Mammary epithelial cell (primary cell): ENCODE measurements at regions of chr16 and their contacts with region 1.

Region 1: GRCh38 chr16:13453938-13454553 is 465.9 kb upstream of the ERCC4 start:
- DNase-seq: peak; percentile 48
- H3K4me3 ChIP-seq: no peak overlapping the region
- H3K27ac ChIP-seq: peak overlapping the region; percentile 50
- H3K4me1 ChIP-seq: peaks cover 15% of the 10 kb centered on the region
- H3K27me3 ChIP-seq: no peaks in the 10 kb centered on the region
- CTCF ChIP-seq: peak; percentile 67 to 69

Region 2: GRCh38 chr16:12095275-12096156 is 1358.5 kb before region 1 on chr16:
- CTCF ChIA-PET with region 1: no interaction called
- dilution Hi-C with region 1: no loop called
- in situ Hi-C with region 1: no loop called
- intact Hi-C with region 1: loop called (anchors 5 kb)
- DNase-seq: peak; percentile 10
- H3K4me3 ChIP-seq: no peak overlapping the region
- H3K27ac ChIP-seq: no peak overlapping the region
- H3K4me1 ChIP-seq: no peaks in the 10 kb centered on the region
- H3K27me3 ChIP-seq: no peaks in the 10 kb centered on the region
- CTCF ChIP-seq: peak; percentile 87

Region 3: GRCh38 chr16:12455287-12455798 is 998.7 kb before region 1 on chr16:
- CTCF ChIA-PET with region 1: no interaction called
- dilution Hi-C with region 1: no loop called
- in situ Hi-C with region 1: no loop called
- intact Hi-C with region 1: loop called (anchors 1 kb)
- DNase-seq: peak; percentile 35
- H3K4me3 ChIP-seq: no peak overlapping the region
- H3K27ac ChIP-seq: no peak overlapping the region
- H3K4me1 ChIP-seq: no peaks in the 10 kb centered on the region
- H3K27me3 ChIP-seq: no peaks in the 10 kb centered on the region
- CTCF ChIP-seq: peak; percentile 73 to 85

Region 4: DNA sequence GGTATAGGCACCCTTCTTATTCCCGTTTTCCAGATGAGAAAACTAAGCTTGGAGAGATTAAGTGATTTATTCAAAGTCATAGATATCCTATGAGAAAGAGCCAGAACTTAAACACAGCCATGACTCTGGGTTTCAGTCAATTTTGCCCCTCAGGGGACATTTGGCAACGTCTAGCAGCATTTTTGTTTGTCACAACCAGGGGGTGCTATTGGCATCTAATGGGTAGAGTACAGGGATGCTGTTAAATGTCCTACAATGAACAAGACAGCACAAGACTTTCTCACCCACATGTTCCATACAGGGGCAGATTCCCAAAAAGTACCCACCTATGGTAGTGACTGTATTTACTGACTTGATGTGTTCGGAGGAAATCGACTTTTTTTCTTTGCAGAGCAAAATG is 557.5 kb before region 1 on chr16:
- CTCF ChIA-PET with region 1: interaction called, 6 read pairs
- dilution Hi-C with region 1: no loop called
- in situ Hi-C with region 1: loop called (anchors 5 to 10 kb)
- intact Hi-C with region 1: loop called (anchors 1 kb)
- DNase-seq: peak; percentile 61
- H3K4me3 ChIP-seq: no peak overlapping the region
- H3K27ac ChIP-seq: no peak overlapping the region
- H3K4me1 ChIP-seq: peaks cover 19% of the 10 kb centered on the region
- H3K27me3 ChIP-seq: no peaks in the 10 kb centered on the region
- CTCF ChIP-seq: peak; percentile 64 to 84

Region 5: DNA sequence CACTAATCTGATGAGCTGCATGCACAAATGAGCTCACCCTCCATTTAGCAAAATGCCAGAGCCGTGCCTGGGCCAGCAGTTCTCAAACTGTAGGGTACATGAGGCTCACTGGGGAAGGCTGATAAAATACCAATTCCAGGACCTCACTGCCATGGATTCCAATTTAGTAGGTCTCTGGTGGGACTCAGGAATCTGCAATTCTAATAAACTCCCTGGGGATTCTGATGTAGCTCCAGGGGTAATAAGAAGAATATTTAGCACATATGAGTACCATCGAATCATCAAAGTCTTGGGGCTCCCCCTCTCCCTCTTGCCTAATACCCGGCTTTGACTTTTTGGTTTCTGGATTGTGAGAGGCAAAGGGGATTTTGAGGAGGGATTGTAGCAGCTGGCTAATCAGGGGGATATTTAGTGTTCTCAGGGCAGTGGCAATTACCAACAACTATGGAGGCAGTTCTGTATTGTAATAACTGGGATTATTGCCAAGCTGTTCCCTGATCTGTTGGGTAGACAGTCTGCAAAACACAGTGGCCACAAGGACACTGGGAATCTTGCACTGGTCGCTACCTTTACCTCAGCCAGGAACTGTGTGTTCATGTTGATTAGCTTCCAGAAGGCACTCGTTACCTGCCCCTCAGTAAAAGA is 412.3 kb before region 1 on chr16:
- CTCF ChIA-PET with region 1: no interaction called
- dilution Hi-C with region 1: no loop called
- in situ Hi-C with region 1: no loop called
- intact Hi-C with region 1: loop called (anchors 10 kb)
- DNase-seq: no peak
- H3K4me3 ChIP-seq: no peak overlapping the region
- H3K27ac ChIP-seq: no peak overlapping the region
- H3K4me1 ChIP-seq: no peaks in the 10 kb centered on the region
- H3K27me3 ChIP-seq: no peaks in the 10 kb centered on the region
- CTCF ChIP-seq: no peak

Region 6: GRCh38 chr16:13206606-13207005 is 247.4 kb before region 1 on chr16:
- CTCF ChIA-PET with region 1: no interaction called
- dilution Hi-C with region 1: no loop called
- in situ Hi-C with region 1: no loop called
- intact Hi-C with region 1: no loop called
- DNase-seq: no peak
- H3K4me3 ChIP-seq: no peak overlapping the region
- H3K27ac ChIP-seq: no peak overlapping the region
- H3K4me1 ChIP-seq: no peaks in the 10 kb centered on the region
- H3K27me3 ChIP-seq: no peaks in the 10 kb centered on the region
- CTCF ChIP-seq: no peak

Region 7: DNA sequence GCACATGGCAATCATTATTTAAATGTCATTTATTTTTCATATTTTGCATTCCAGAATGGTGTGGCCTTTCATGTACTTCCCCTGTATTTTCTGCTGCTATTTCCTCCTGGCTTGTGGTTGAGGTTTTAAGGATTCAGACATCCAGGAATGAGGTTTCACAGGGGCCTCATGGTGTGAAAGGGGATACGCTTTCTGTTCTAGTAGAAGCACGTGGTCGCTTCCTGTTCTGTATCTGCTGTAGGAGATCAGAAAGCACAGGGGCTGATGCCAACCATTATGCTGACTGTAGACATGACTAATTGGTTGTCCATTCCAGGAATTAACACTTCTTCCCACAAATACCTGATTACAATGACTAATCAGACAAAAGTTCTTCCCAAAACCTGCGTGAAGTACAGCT is 146.8 kb before region 1 on chr16:
- CTCF ChIA-PET with region 1: no interaction called
- dilution Hi-C with region 1: no loop called
- in situ Hi-C with region 1: no loop called
- intact Hi-C with region 1: loop called (anchors 10 kb)
- DNase-seq: peak; percentile 96
- H3K4me3 ChIP-seq: no peak overlapping the region
- H3K27ac ChIP-seq: peak overlapping the region; percentile 57
- H3K4me1 ChIP-seq: peaks cover 37% of the 10 kb centered on the region
- H3K27me3 ChIP-seq: no peaks in the 10 kb centered on the region
- CTCF ChIP-seq: no peak

Region 8: GRCh38 chr16:13873835-13874438 is 419.9 kb after region 1 on chr16:
- CTCF ChIA-PET with region 1: no interaction called
- dilution Hi-C with region 1: no loop called
- in situ Hi-C with region 1: no loop called
- intact Hi-C with region 1: loop called (anchors 10 kb)
- DNase-seq: peak; percentile 7
- H3K4me3 ChIP-seq: no peak overlapping the region
- H3K27ac ChIP-seq: no peak overlapping the region
- H3K4me1 ChIP-seq: no peaks in the 10 kb centered on the region
- H3K27me3 ChIP-seq: no peaks in the 10 kb centered on the region
- CTCF ChIP-seq: peak; percentile 31 to 54